ENCODE measurements at regions of chr1 and their contacts with region 1.

Region 1: DNA sequence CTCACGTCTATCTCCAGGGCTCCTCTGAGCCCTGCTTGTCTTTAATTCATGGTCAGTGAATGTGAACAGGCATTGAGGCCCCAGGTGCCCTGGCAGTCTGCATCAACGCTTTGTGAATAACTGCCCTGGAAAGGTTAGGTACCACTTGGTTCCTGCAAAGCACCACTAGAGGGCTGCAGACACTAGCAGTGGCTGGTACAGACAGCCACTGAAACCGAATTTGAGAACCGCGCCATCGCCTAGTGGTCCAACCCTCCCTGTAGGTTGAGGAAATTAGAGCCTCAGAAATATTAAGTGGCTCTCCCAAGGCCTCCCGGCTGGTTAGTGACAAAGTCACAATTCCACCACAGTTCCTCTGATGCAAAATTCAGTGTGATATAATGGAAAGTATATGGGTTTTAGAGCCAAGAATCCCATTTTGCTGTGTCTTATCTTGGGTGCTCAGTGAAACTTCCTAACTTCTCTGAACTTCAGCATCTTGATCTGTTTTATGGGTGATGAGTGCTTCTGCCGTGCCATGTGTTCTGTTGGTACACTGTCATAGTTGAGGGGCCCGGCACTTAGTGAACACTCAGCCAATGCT is 46.2 kb upstream of the BCL9 start:
- DNase-seq: peak; percentile 84
- H3K4me3 ChIP-seq: no peak overlapping the region
- H3K27ac ChIP-seq: no peak overlapping the region
- H3K4me1 ChIP-seq: no peaks in the 10 kb centered on the region
- H3K27me3 ChIP-seq: no peaks in the 10 kb centered on the region
- CTCF ChIP-seq: peak; percentile 94

Region 2: GRCh38 chr1:147409886-147410285 is 85.2 kb before region 1 on chr1:
- CTCF ChIA-PET with region 1: no interaction called
- POLR2A ChIA-PET with region 1: no interaction called
- intact Hi-C with region 1: no loop called
- DNase-seq: no peak
- H3K4me3 ChIP-seq: no peak overlapping the region
- H3K27ac ChIP-seq: no peak overlapping the region
- H3K4me1 ChIP-seq: no peaks in the 10 kb centered on the region
- H3K27me3 ChIP-seq: no peaks in the 10 kb centered on the region
- CTCF ChIP-seq: no peak

Region 3: GRCh38 chr1:147627435-147628110 is 132.5 kb after region 1 on chr1:
- CTCF ChIA-PET with region 1: interaction called, 4 read pairs
- POLR2A ChIA-PET with region 1: interaction called, 3 read pairs
- intact Hi-C with region 1: loop called (anchors 5 kb)
- DNase-seq: peak; percentile 59
- H3K4me3 ChIP-seq: no peak overlapping the region
- H3K27ac ChIP-seq: no peak overlapping the region
- H3K4me1 ChIP-seq: peaks cover 13% of the 10 kb centered on the region
- H3K27me3 ChIP-seq: no peaks in the 10 kb centered on the region
- CTCF ChIP-seq: peak; percentile 90

Region 4: DNA sequence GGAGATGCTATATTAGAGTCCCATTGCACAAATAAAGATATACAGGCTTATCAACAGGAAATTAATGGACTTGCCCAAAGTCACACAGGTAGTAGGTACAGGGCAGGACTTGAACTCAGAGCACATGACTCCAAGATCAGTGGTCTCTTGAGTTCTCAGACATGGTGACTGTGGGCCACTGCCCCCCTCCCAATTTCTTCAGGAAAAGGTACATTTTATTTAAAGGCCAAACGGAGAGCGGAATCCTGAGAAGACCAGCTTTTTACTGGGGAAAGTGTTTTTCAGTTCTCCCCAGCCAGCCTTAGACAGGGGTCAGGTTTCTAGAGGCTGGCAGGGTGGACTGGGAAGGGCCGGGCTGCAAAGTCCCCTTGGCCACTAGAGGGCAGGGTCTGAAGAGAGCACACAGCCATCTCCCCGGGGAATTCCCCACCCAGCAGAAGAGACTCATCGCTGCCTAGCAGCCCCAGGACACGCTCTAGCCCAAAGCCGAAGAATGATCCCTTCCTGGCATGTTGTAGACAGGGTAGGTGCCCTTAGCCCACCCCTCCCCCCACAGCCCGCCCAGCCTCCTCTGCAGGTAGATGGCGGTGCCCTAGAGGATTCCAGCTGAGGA is 145.6 kb after region 1 on chr1:
- CTCF ChIA-PET with region 1: no interaction called
- POLR2A ChIA-PET with region 1: no interaction called
- intact Hi-C with region 1: loop called (anchors 1 kb)
- DNase-seq: peak; percentile 91
- H3K4me3 ChIP-seq: no peak overlapping the region
- H3K27ac ChIP-seq: no peak overlapping the region
- H3K4me1 ChIP-seq: no peaks in the 10 kb centered on the region
- H3K27me3 ChIP-seq: no peaks in the 10 kb centered on the region
- CTCF ChIP-seq: peak; percentile 81

Region 5: DNA sequence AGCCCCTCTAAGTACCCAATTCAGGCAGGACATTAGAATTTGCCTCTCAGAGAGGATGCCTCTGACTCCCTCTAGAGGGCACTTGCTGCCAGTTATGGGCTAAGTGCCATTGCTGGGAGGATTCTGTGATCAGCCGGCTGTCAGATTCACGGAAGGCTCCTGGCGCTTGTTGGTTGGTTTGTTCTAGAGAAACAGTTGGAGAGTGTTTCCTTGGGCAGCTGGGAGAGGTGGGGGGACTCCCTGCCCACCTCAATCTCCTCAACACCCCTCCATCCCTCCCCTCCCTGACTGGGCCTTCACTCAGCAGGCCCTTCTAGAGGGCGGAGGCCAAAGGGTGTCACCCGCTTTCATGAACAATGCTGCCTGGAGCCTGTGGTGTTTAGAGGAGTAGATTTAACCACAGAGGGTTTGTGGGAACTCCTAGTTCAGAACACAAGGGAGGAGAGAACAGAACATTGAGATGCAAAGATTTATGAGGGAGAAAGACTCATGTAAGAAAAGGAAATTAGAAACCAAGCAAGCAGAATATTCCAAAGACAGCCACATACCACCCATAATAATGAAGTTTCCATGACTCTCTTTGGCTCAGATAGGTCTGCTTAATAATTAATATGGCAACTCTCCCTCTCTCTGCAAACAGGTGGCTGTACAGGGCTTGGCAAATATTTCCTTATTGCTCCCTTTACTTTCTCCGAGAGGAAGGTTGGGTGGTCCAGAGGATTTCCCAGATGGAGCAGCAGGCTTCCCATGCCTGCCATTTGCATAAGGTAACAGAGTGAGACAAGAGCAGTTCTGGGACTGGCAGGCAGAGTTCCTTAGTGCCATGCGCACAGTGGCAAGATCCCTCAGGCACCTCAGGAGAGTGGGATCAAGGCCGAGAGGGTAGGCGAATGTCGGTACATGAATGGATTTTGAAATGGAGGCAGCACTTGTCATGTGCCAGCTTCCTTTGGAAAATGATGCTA is 205.2 kb after region 1 on chr1:
- CTCF ChIA-PET with region 1: no interaction called
- POLR2A ChIA-PET with region 1: no interaction called
- intact Hi-C with region 1: loop called (anchors 5 kb)
- DNase-seq: peak; percentile 82
- H3K4me3 ChIP-seq: no peak overlapping the region
- H3K27ac ChIP-seq: no peak overlapping the region
- H3K4me1 ChIP-seq: no peaks in the 10 kb centered on the region
- H3K27me3 ChIP-seq: no peaks in the 10 kb centered on the region
- CTCF ChIP-seq: peak; percentile 92